OCI-LY7 (cell line): ENCODE measurements at regions of chr2 and their contacts with region 1.

Region 1: GRCh38 chr2:74919827-74920226 is 38.6 kb upstream of the POLE4 start:
- DNase-seq: peak; percentile 62
- H3K4me3 ChIP-seq: peak overlapping the region; percentile 22
- H3K27ac ChIP-seq: no peak overlapping the region
- H3K4me1 ChIP-seq: no peaks in the 10 kb centered on the region
- CTCF ChIP-seq: peak; percentile 81

Region 2: DNA sequence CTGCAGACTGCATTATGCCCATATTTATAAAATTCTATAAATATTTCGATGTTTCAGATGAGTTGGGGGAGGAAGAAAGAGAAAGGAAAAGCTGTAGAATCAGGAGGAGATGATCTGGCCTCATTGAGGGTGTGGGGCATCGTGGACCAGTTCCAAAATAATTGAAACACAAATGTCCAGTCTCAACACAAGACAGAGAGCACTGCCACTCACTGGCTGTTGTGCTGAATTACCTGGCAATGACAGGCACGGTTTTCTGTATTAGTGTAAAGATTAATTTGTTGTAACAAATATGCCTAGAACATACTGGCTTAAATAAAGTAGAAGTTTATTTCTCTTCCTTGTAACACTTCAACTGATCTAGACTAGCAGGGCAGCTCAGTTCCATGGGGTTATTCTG is 62.8 kb after region 1 on chr2:
- CTCF ChIA-PET with region 1: interaction called, 4 read pairs
- POLR2A ChIA-PET with region 1: no interaction called
- intact Hi-C with region 1: loop called (anchors 5 kb)
- DNase-seq: no peak
- H3K4me3 ChIP-seq: no peak overlapping the region
- H3K27ac ChIP-seq: no peak overlapping the region
- H3K4me1 ChIP-seq: peaks cover 26% of the 10 kb centered on the region
- CTCF ChIP-seq: peak; percentile 62

Region 3: DNA sequence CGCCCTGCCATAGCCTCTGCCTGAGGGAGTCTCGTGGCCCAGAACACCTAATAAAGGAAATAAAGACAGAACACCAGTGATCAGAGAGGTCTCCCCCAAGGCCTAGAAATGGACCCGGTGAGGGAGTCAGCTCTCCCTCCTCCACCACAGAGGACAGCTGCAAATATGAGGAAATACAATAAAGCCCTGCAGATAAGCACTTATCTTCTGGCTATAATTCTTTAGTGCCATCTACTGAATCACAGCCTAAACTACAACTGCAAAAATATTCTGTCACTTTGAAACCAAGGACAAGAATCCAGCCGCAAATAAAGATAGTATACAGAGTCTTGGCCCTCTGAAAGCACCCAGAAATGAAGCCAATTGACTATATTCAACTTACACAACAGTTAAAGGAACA is 321.9 kb after region 1 on chr2:
- CTCF ChIA-PET with region 1: no interaction called
- POLR2A ChIA-PET with region 1: no interaction called
- intact Hi-C with region 1: loop called (anchors 2 kb)
- DNase-seq: peak; percentile 21
- H3K4me3 ChIP-seq: no peak overlapping the region
- H3K27ac ChIP-seq: no peak overlapping the region
- H3K4me1 ChIP-seq: no peaks in the 10 kb centered on the region
- CTCF ChIP-seq: peak; percentile 79